B cell (primary cell): ENCODE measurements at regions of chr11 and their contacts with region 1.

Region 1: GRCh38 chr11:34997952-34998528 is 81.6 kb downstream of the PDHX start:
- DNase-seq: peak; percentile 63
- ATAC-seq: peak; percentile 56
- H3K4me3 ChIP-seq: peak overlapping the region in 2 of 5 experiments; percentile 2 to 31
- H3K4me3 Mint-ChIP-seq: peak overlapping the region; percentile 59
- H3K27ac ChIP-seq: peak overlapping the region in 1 of 2 donors; percentile 4
- H3K27ac Mint-ChIP-seq: peak overlapping the region; percentile 71
- H3K4me1 ChIP-seq: peaks cover 11 to 16% of the 10 kb centered on the region in 2 donors
- H3K4me1 Mint-ChIP-seq: peaks cover 27% of the 10 kb centered on the region
- H3K27me3 ChIP-seq: no peaks in the 10 kb centered on the region
- H3K27me3 Mint-ChIP-seq: no peaks in the 10 kb centered on the region
- CTCF ChIP-seq: peak; percentile 93

Region 2: GRCh38 chr11:34480314-34480713 is 517.7 kb before region 1 on chr11:
- CTCF ChIA-PET with region 1: no interaction called
- POLR2A ChIA-PET with region 1: no interaction called
- intact Hi-C with region 1: no loop called
- DNase-seq: no peak
- ATAC-seq: no peak
- H3K4me3 ChIP-seq: no peak overlapping the region
- H3K4me3 Mint-ChIP-seq: no peak overlapping the region
- H3K27ac ChIP-seq: no peak overlapping the region
- H3K27ac Mint-ChIP-seq: no peak overlapping the region
- H3K4me1 ChIP-seq: no peaks in the 10 kb centered on the region
- H3K4me1 Mint-ChIP-seq: no peaks in the 10 kb centered on the region
- H3K27me3 ChIP-seq: no peaks in the 10 kb centered on the region
- H3K27me3 Mint-ChIP-seq: peaks cover 6% of the 10 kb centered on the region
- CTCF ChIP-seq: no peak

Region 3: DNA sequence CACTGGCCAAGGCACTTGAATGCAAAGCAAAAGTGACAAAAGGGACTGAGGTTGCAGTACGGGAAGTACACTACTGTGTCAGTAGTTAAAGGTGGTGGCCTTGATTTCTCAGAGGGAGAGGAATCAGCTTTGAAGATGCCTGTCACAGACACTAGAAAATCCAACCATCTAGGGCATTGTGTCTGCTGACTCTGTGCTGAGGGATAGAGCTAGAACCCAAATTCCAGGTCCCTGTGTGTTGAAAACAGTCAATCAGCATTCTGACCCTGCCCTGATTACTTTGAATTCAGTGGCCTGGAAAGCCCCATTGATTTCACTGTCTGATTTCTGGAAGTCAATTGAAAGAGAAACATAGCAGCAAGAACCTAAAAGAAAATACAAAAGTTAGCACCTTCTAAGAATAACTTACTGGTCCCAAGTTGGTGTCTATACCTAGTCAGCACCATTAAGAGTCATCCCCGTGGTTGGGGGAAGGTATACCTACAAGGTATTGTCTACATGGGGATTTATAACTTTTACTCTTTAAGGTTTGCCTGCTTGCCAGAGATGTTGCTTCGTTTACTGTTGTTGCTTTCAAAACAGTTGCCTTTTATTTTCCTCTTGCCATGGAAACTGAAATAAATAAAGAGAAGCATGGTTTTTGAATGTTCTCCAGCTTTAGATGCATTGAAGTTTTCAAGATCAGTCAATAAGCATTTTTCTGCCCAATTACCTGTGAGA is 15.6 kb after region 1 on chr11:
- CTCF ChIA-PET with region 1: interaction called, 12 read pairs
- POLR2A ChIA-PET with region 1: interaction called, 3 read pairs
- intact Hi-C with region 1: loop called (anchors 2 kb)
- DNase-seq: peak; percentile 70
- ATAC-seq: peak; percentile 60
- H3K4me3 ChIP-seq: peak overlapping the region in 1 of 5 experiments; percentile 0
- H3K4me3 Mint-ChIP-seq: peak overlapping the region; percentile 84
- H3K27ac ChIP-seq: peak overlapping the region; percentile 65 to 88
- H3K27ac Mint-ChIP-seq: peak overlapping the region; percentile 90
- H3K4me1 ChIP-seq: peaks cover 23 to 26% of the 10 kb centered on the region in 2 donors
- H3K4me1 Mint-ChIP-seq: peaks cover 27% of the 10 kb centered on the region
- H3K27me3 ChIP-seq: no peaks in the 10 kb centered on the region
- H3K27me3 Mint-ChIP-seq: no peaks in the 10 kb centered on the region
- CTCF ChIP-seq: no peak

Region 4: DNA sequence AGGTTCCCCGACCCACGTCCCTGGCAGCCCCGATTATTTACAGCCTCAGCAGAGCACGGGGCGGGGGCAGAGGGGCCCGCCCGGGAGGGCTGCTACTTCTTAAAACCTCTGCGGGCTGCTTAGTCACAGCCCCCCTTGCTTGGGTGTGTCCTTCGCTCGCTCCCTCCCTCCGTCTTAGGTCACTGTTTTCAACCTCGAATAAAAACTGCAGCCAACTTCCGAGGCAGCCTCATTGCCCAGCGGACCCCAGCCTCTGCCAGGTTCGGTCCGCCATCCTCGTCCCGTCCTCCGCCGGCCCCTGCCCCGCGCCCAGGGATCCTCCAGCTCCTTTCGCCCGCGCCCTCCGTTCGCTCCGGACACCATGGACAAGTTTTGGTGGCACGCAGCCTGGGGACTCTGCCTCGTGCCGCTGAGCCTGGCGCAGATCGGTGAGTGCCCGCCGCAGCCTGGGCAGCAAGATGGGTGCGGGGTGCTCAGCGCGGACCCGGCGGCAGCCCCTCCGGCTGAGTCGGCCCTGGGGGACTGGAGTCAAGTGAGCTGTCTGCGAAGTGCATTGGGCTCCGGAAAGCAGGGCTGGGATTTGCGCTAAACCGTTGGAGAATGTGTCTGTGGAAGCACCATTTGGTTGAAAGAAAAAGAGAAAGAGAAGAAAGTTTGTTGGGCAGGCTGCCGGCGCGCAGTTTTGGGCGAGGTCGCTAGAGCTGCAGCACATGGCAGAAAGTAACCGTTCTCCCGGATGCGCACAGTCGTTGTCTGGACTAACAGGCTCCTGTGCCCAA is 141.1 kb after region 1 on chr11 and contains the start of gene CD44:
- CTCF ChIA-PET with region 1: interaction called, 40 read pairs
- POLR2A ChIA-PET with region 1: no interaction called
- intact Hi-C with region 1: loop called (anchors 1 kb)
- DNase-seq: peak; percentile 90
- ATAC-seq: peak; percentile 78
- H3K4me3 ChIP-seq: peak within 1 kb of the TSS; percentile 80 to 90 (median 89)
- H3K4me3 Mint-ChIP-seq: peak within 1 kb of the TSS; percentile 96
- H3K27ac ChIP-seq: peak within 1 kb of the TSS; percentile 88 to 94
- H3K27ac Mint-ChIP-seq: peak within 1 kb of the TSS; percentile 99
- H3K4me1 ChIP-seq: peaks cover 44 to 55% of the 10 kb centered on the region in 2 donors
- H3K4me1 Mint-ChIP-seq: peaks cover 48% of the 10 kb centered on the region
- H3K27me3 ChIP-seq: no peaks in the 10 kb centered on the region
- H3K27me3 Mint-ChIP-seq: no peaks in the 10 kb centered on the region
- CTCF ChIP-seq: no peak
- total RNA-seq, gene CD44: 895 and 896 TPM in 2 replicates

Region 5: DNA sequence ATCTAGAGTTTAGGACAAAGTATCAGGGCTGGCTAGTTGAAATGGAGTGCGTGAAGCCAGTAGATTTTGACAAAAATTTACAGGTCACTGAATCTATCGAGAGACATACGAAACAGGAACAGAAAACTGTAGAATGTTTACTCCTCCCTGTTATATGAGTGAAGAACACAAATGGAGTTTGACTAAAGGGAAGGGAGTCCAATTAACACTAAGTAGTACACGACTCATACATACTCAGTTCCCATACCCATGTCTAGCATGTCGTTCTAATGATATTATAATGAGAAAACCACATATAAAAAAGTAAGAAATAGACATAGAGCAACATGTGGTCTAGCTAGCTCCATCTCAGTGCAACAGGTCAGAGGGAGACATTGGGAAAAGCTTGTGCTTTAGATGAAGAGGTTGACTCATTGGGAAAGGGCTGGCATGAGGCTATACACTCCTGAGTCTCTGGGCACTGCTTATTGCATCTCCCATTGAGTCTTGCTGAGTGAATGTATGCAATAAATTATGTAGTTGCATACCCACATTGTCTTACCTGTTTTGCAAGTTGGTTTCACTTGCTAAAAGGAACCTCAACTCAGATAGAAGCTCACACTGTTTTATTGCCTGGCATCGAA is 184.4 kb after region 1 on chr11:
- CTCF ChIA-PET with region 1: interaction called, 13 read pairs
- POLR2A ChIA-PET with region 1: interaction called, 8 read pairs
- intact Hi-C with region 1: loop called (anchors 5 kb)
- DNase-seq: peak; percentile 67
- ATAC-seq: peak; percentile 84
- H3K4me3 ChIP-seq: peak overlapping the region in 3 of 5 experiments; percentile 1 to 41 (median 6)
- H3K4me3 Mint-ChIP-seq: peak overlapping the region; percentile 81
- H3K27ac ChIP-seq: peak overlapping the region; percentile 68 to 80
- H3K27ac Mint-ChIP-seq: peak overlapping the region; percentile 90
- H3K4me1 ChIP-seq: peaks cover 34 to 41% of the 10 kb centered on the region in 2 donors
- H3K4me1 Mint-ChIP-seq: peaks cover 67% of the 10 kb centered on the region
- H3K27me3 ChIP-seq: no peaks in the 10 kb centered on the region
- H3K27me3 Mint-ChIP-seq: no peaks in the 10 kb centered on the region
- CTCF ChIP-seq: no peak

Region 6: DNA sequence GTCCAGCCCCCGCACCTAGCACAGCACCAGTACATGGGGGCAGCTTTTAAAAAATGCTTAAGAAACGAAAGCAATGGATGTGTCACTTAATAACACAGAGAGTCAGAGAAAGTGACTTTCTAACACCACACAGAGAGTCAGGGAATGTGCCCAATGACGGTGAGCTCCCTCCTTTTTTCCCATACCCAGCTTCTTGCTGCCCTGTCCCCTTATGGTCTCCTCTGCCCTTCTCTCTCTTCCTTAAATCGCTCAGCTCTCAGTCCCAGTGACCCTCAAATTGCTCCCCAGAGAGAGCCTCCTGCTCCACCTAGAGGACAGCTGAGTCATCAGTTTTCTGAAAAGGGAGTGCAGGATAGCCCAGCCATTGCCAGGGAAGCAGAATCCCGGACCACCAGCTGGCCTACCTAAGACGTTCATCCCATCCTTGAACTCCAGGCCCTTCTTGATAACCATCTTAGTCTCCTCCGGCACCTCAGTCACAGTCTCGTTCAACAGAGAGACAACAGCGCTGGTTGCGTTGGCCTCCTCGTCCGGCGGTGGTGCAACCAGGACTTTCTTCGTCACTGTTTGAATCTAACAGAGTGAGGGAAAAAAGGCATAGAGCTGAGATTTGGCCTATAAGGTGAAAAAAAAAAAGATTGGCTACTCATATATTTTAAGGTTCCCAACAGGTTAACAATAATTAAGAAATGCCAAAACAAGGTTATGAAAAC is 307.8 kb after region 1 on chr11:
- CTCF ChIA-PET with region 1: interaction called, 22 read pairs
- POLR2A ChIA-PET with region 1: no interaction called
- intact Hi-C with region 1: loop called (anchors 10 kb)
- DNase-seq: peak; percentile 52
- ATAC-seq: peak; percentile 41
- H3K4me3 ChIP-seq: peak overlapping the region in 1 of 5 experiments; percentile 7
- H3K4me3 Mint-ChIP-seq: peak overlapping the region; percentile 27
- H3K27ac ChIP-seq: no peak overlapping the region
- H3K27ac Mint-ChIP-seq: no peak overlapping the region
- H3K4me1 ChIP-seq: peaks cover 6 to 9% of the 10 kb centered on the region in 2 donors
- H3K4me1 Mint-ChIP-seq: peaks cover 12% of the 10 kb centered on the region
- H3K27me3 ChIP-seq: no peaks in the 10 kb centered on the region
- H3K27me3 Mint-ChIP-seq: no peaks in the 10 kb centered on the region
- CTCF ChIP-seq: peak; percentile 54